ENCODE measurements at regions of chr5 and their contacts with region 1.

Region 1: GRCh38 chr5:120062515-120063048 is 401.5 kb upstream of the PRR16 start:
- ATAC-seq: no peak
- H3K4me3 ChIP-seq: no peak overlapping the region
- H3K27ac ChIP-seq: no peak overlapping the region
- H3K4me1 ChIP-seq: no peaks in the 10 kb centered on the region

Region 2: GRCh38 chr5:120463991-120464626 is 401.5 kb after region 1 on chr5 and contains the start of gene PRR16:
- in situ Hi-C with region 1: loop called in 2 of 9 experiments (anchors 10 to 25 kb)
- ATAC-seq: peak; percentile 87 to 95 (median 90)
- H3K4me3 ChIP-seq: peak within 1 kb of the TSS; percentile 45 to 62 (median 47)
- H3K27ac ChIP-seq: no peak within 1 kb of the TSS
- H3K4me1 ChIP-seq: no peaks in the 10 kb centered on the region
- total RNA-seq, gene PRR16: 0.45 to 3.4 (median 1.3) TPM in 7 of 8 experiments, not detected in the other

Measured in motor neuron (in vitro differentiated cells).